ENCODE measurements at regions of chr9 and their contacts with region 1.

Region 1: GRCh38 chr9:6367128-6367890 is 39.1 kb downstream of the TPD52L3 start:
- DNase-seq: no peak
- ATAC-seq: no peak
- H3K4me3 ChIP-seq: no peak overlapping the region
- H3K27ac ChIP-seq: no peak overlapping the region
- H3K4me1 ChIP-seq: no peaks in the 10 kb centered on the region
- H3K27me3 ChIP-seq: no peaks in the 10 kb centered on the region
- CTCF ChIP-seq: no peak
- POLR2A ChIP-seq: no peak

Region 2: GRCh38 chr9:6538666-6539071 is 171.4 kb after region 1 on chr9:
- in situ Hi-C with region 1: no loop called
- intact Hi-C with region 1: no loop called
- DNase-seq: no peak
- ATAC-seq: no peak
- H3K4me3 ChIP-seq: no peak overlapping the region
- H3K27ac ChIP-seq: no peak overlapping the region
- H3K4me1 ChIP-seq: no peaks in the 10 kb centered on the region
- H3K27me3 ChIP-seq: no peaks in the 10 kb centered on the region
- CTCF ChIP-seq: no peak
- POLR2A ChIP-seq: no peak

Region 3: GRCh38 chr9:6575324-6576034 is 208.2 kb after region 1 on chr9:
- in situ Hi-C with region 1: loop called in 1 of 4 experiments (anchors 10 kb)
- intact Hi-C with region 1: no loop called
- DNase-seq: no peak
- ATAC-seq: no peak
- H3K4me3 ChIP-seq: no peak overlapping the region
- H3K27ac ChIP-seq: no peak overlapping the region
- H3K4me1 ChIP-seq: no peaks in the 10 kb centered on the region
- H3K27me3 ChIP-seq: no peaks in the 10 kb centered on the region
- CTCF ChIP-seq: no peak
- POLR2A ChIP-seq: no peak